Dendritic cell treated with granulocyte-macrophage colony-stimulating factor and Interleukin-4, amounts not matched to agents 40 ng/mL and 50 ng/mL, for 4 days (primary cell): ENCODE measurements at regions of chr10 and their contacts with region 1.

Region 1: GRCh38 chr10:63157845-63158624 is 24.9 kb downstream of the NRBF2 start:
- H3K4me3 Mint-ChIP-seq: no peak overlapping the region
- H3K27ac Mint-ChIP-seq: no peak overlapping the region
- H3K4me1 Mint-ChIP-seq: peaks cover 21% of the 10 kb centered on the region
- H3K27me3 Mint-ChIP-seq: no peaks in the 10 kb centered on the region

Region 2: GRCh38 chr10:62594093-62594520 is 563.9 kb before region 1 on chr10:
- intact Hi-C with region 1: loop called (anchors 1 kb)
- H3K4me3 Mint-ChIP-seq: no peak overlapping the region
- H3K27ac Mint-ChIP-seq: peak overlapping the region; percentile 24
- H3K4me1 Mint-ChIP-seq: peaks cover 22% of the 10 kb centered on the region
- H3K27me3 Mint-ChIP-seq: no peaks in the 10 kb centered on the region

Region 3: GRCh38 chr10:63003816-63004453 is 154.1 kb before region 1 on chr10:
- intact Hi-C with region 1: loop called (anchors 5 kb)
- H3K4me3 Mint-ChIP-seq: no peak overlapping the region
- H3K27ac Mint-ChIP-seq: no peak overlapping the region
- H3K4me1 Mint-ChIP-seq: no peaks in the 10 kb centered on the region
- H3K27me3 Mint-ChIP-seq: peaks cover 19% of the 10 kb centered on the region

Region 4: DNA sequence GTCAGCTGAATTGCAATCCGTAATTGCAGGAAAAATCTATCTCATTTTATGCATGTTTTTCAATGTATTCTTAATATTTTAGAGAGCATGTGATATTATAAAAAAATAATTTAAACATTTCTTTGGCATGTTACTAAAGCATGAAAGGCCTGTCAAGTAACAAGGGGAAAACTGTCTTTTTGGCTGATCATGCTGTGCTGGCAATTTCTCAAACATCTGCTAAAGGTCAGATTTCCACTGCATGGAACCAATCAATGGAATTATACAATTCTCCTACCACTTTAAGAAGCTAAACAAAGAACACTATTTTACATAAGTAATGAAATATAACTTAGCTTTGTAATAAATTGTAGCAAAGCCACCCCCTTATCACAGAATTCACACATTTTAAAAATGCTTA is 258.3 kb after region 1 on chr10:
- intact Hi-C with region 1: no loop called
- H3K4me3 Mint-ChIP-seq: no peak overlapping the region
- H3K27ac Mint-ChIP-seq: no peak overlapping the region
- H3K4me1 Mint-ChIP-seq: peaks cover 17% of the 10 kb centered on the region
- H3K27me3 Mint-ChIP-seq: no peaks in the 10 kb centered on the region